GM13976 (cell line): ENCODE measurements at regions of chr4 and their contacts with region 1.

Region 1: DNA sequence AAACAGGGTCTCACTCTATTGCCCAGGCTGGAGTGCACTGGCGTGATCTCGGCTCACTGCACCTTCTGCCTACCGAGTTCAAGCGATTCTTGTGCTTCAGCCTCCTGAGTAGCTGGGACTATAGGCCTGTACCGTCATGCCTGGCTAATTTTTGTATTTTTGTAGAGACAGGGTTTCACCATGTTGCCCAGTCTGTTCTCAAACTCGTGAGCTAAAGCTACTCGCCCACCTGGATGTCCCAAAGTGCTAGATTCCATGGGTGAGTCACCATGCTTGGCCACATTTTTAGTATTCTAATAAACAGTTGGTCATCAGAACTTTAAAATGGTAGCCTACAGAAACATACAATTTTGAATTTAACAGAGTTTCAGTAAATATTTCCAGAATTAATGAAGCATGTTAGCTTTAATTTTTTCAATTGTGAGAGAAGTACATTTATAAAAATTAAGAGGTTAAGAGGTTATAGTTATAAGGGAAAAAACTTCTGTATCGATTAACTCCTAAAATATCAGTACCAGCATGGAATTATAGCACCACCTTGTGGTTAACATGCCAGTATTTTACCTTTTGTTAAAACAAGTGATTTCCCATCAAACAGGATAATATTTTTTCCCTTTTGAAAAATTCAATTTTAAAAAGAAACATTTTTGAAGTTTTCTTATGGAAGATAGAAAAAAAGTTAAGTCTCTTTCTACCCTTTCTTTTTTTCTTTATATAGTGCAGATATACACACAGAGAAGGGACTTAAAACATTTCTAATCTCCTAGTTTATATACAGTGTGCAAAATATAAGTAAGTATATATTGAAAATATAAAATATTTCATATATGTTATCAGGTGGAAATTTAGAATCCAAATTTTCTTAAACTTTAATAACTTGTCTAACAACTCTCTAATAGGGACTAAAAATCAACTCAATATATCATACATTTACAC is 35.4 kb downstream of the CEP44 start:
- DNase-seq: peak; percentile 33
- CTCF ChIP-seq: peak; percentile 43

Region 2: DNA sequence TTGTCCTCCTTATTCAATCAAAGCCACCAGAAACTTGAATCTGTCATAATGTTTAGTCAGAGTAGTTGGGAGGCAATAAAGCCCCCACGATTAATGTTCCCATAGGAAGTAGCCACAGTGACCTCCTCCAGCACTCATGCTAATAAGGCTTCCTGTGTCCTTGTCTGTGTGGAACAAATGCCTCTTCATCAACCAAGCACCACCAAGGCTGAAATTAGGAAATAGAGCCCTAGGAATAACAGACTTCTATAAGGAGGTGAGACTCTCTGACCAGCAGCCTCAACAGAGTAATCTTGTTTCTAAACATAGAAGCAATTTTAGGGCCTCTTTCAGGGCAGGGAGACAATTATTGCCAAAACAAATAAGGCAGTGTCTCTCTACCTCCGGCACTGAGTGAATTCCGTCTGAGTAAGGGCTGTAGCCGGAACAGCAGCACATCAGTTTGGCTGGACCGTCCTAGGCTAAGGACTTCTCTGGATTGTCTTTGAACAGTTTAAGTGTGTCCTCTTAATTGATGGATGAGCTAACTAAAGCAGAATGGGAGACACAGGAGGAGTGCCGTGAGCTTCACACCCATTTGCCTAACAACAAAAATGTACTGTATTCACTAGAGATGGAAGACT is 459.9 kb before region 1 on chr4:
- in situ Hi-C with region 1: no loop called
- DNase-seq: no peak
- CTCF ChIP-seq: no peak

Region 3: GRCh38 chr4:174222266-174222872 is 96.7 kb before region 1 on chr4:
- in situ Hi-C with region 1: loop called (anchors 10 kb)
- DNase-seq: peak; percentile 28
- CTCF ChIP-seq: peak; percentile 40